ENCODE measurements at regions of chr18 and their contacts with region 1.

Region 1: GRCh38 chr18:11937874-11938478 is 29.9 kb upstream of the MPPE1 start:
- DNase-seq: peak; percentile 79 to 85
- H3K4me3 ChIP-seq: no peak overlapping the region
- H3K27ac ChIP-seq: no peak overlapping the region
- H3K4me1 ChIP-seq: no peaks in the 10 kb centered on the region
- H3K27me3 ChIP-seq: no peaks in the 10 kb centered on the region
- CTCF ChIP-seq: peak; percentile 37 to 92 (median 80)
- POLR2A ChIP-seq: no peak

Region 2: GRCh38 chr18:11733031-11733430 is 204.9 kb before region 1 on chr18:
- intact Hi-C with region 1: loop called (anchors 10 kb)
- DNase-seq: peak; percentile 73 to 79
- H3K4me3 ChIP-seq: no peak overlapping the region
- H3K27ac ChIP-seq: no peak overlapping the region
- H3K4me1 ChIP-seq: no peaks in the 10 kb centered on the region
- H3K27me3 ChIP-seq: no peaks in the 10 kb centered on the region
- CTCF ChIP-seq: peak; percentile 72 to 91 (median 84)
- POLR2A ChIP-seq: no peak

Region 3: GRCh38 chr18:11995445-11996189 is 57.6 kb after region 1 on chr18:
- intact Hi-C with region 1: loop called (anchors 2 kb)
- DNase-seq: peak; percentile 87 to 90
- H3K4me3 ChIP-seq: no peak overlapping the region
- H3K27ac ChIP-seq: peak overlapping the region; percentile 37 to 77 (median 63)
- H3K4me1 ChIP-seq: peaks cover 31 to 62% of the 10 kb centered on the region in 2 donors
- H3K27me3 ChIP-seq: no peaks in the 10 kb centered on the region
- CTCF ChIP-seq: peak; percentile 55 to 91 (median 78)
- POLR2A ChIP-seq: peak in 1 of 2 donors; percentile 21

Region 4: GRCh38 chr18:12038639-12039417 is 100.9 kb after region 1 on chr18:
- intact Hi-C with region 1: loop called (anchors 5 kb)
- DNase-seq: peak; percentile 83 to 84
- H3K4me3 ChIP-seq: peak overlapping the region in 1 of 3 donors; percentile 23
- H3K27ac ChIP-seq: peak overlapping the region in 1 of 3 donors; percentile 20
- H3K4me1 ChIP-seq: peaks cover 7 to 9% of the 10 kb centered on the region in 2 donors
- H3K27me3 ChIP-seq: no peaks in the 10 kb centered on the region
- CTCF ChIP-seq: peak; percentile 87 to 99 (median 98)
- POLR2A ChIP-seq: peak in 1 of 2 donors; percentile 14

Measured in thyroid gland (tissue), 4 donors.